Mammary epithelial cell (primary cell): ENCODE measurements at regions of chr9 and their contacts with region 1.

Region 1: GRCh38 chr9:113963017-113963620 is 87.0 kb downstream of the ZNF618 start:
- DNase-seq: peak; percentile 21
- H3K4me3 ChIP-seq: no peak overlapping the region
- H3K27ac ChIP-seq: no peak overlapping the region
- H3K4me1 ChIP-seq: peaks cover 4% of the 10 kb centered on the region
- H3K27me3 ChIP-seq: no peaks in the 10 kb centered on the region
- CTCF ChIP-seq: peak; percentile 82 to 84

Region 2: GRCh38 chr9:113682297-113682771 is 280.8 kb before region 1 on chr9:
- CTCF ChIA-PET with region 1: no interaction called
- dilution Hi-C with region 1: no loop called
- in situ Hi-C with region 1: no loop called
- intact Hi-C with region 1: loop called (anchors 1 kb)
- DNase-seq: peak; percentile 85
- H3K4me3 ChIP-seq: no peak overlapping the region
- H3K27ac ChIP-seq: no peak overlapping the region
- H3K4me1 ChIP-seq: peaks cover 16% of the 10 kb centered on the region
- H3K27me3 ChIP-seq: no peaks in the 10 kb centered on the region
- CTCF ChIP-seq: peak; percentile 93 to 95

Region 3: DNA sequence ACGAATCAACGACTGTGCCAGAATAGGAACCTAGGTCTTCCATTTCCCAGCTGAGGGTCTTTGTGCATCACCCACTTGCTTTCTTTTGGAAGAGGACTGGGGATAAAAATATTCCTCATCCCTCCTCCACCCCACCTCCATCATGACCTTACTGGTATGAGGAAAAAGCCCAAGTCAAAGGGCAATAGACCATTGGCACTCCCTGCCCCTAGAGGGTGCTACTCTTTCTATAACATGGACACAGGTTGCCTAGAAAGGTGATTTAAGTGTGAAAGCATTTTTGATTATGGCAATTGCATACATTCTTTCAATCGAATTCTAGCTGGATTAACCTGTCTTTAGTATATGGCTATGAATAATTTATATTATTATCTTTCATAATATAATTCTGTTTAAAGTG is 109.8 kb before region 1 on chr9:
- CTCF ChIA-PET with region 1: no interaction called
- dilution Hi-C with region 1: no loop called
- in situ Hi-C with region 1: no loop called
- intact Hi-C with region 1: loop called (anchors 1 kb)
- DNase-seq: no peak
- H3K4me3 ChIP-seq: no peak overlapping the region
- H3K27ac ChIP-seq: no peak overlapping the region
- H3K4me1 ChIP-seq: no peaks in the 10 kb centered on the region
- H3K27me3 ChIP-seq: peaks cover 2% of the 10 kb centered on the region
- CTCF ChIP-seq: peak; percentile 71 to 80

Region 4: GRCh38 chr9:113886466-113886865 is 76.7 kb before region 1 on chr9:
- CTCF ChIA-PET with region 1: no interaction called
- dilution Hi-C with region 1: no loop called
- in situ Hi-C with region 1: no loop called
- intact Hi-C with region 1: loop called (anchors 2 kb)
- DNase-seq: no peak
- H3K4me3 ChIP-seq: peak overlapping the region; percentile 38 to 55 (median 46)
- H3K27ac ChIP-seq: peak overlapping the region; percentile 65
- H3K4me1 ChIP-seq: peaks cover 27% of the 10 kb centered on the region
- H3K27me3 ChIP-seq: no peaks in the 10 kb centered on the region
- CTCF ChIP-seq: no peak

Region 5: GRCh38 chr9:114059047-114059803 is 96.1 kb after region 1 on chr9:
- CTCF ChIA-PET with region 1: no interaction called
- dilution Hi-C with region 1: loop called (anchors 5 kb)
- in situ Hi-C with region 1: no loop called
- intact Hi-C with region 1: no loop called
- DNase-seq: no peak
- H3K4me3 ChIP-seq: no peak overlapping the region
- H3K27ac ChIP-seq: no peak overlapping the region
- H3K4me1 ChIP-seq: no peaks in the 10 kb centered on the region
- H3K27me3 ChIP-seq: no peaks in the 10 kb centered on the region
- CTCF ChIP-seq: no peak

Region 6: GRCh38 chr9:114551883-114552685 is 589.0 kb after region 1 on chr9:
- CTCF ChIA-PET with region 1: no interaction called
- dilution Hi-C with region 1: no loop called
- in situ Hi-C with region 1: no loop called
- intact Hi-C with region 1: no loop called
- DNase-seq: peak; percentile 99
- H3K4me3 ChIP-seq: no peak overlapping the region
- H3K27ac ChIP-seq: peak overlapping the region; percentile 96
- H3K4me1 ChIP-seq: peaks cover 22% of the 10 kb centered on the region
- H3K27me3 ChIP-seq: no peaks in the 10 kb centered on the region
- CTCF ChIP-seq: no peak